HepG2 (cell line): ENCODE measurements at regions of chr6 and their contacts with region 1.

Region 1: GRCh38 chr6:137351890-137352289 is 132.7 kb upstream of the IFNGR1 start:
- DNase-seq: peak; percentile 86
- ATAC-seq: no peak
- H3K4me3 ChIP-seq: no peak overlapping the region
- H3K27ac ChIP-seq: peak overlapping the region; percentile 99
- H3K4me1 ChIP-seq: peaks cover 82% of the 10 kb centered on the region
- H3K27me3 ChIP-seq: no peaks in the 10 kb centered on the region
- CTCF ChIP-seq: no peak
- EP300 ChIP-seq: peak in 1 of 2 experiments; percentile 76; a peak in 2 of 4 replicates
- POLR2A ChIP-seq: no peak
- RAD21 ChIP-seq: no peak

Region 2: DNA sequence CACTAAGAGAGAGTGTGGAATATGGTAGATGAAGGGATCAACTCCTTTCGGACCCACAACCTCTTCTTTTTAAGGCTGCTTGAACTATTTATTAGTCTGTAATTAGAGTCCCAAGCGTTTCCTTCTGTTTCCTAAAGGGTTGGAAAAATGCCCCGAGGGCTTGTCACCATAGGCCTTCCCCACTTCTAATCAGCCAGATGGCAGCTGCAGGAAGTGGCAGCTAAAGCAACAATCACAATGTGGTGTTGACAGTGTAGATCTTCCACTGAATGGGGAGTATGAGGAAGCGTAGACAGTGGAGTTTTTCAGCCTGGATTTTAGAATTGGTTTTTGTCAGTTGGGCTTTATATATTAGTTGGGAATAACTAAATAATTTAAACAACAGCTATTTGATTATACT is 389.2 kb before region 1 on chr6:
- CTCF ChIA-PET with region 1: no interaction called
- POLR2A ChIA-PET with region 1: no interaction called
- in situ Hi-C with region 1: no loop called
- intact Hi-C with region 1: no loop called
- DNase-seq: no peak
- ATAC-seq: no peak
- H3K4me3 ChIP-seq: no peak overlapping the region
- H3K27ac ChIP-seq: no peak overlapping the region
- H3K4me1 ChIP-seq: peaks cover 7% of the 10 kb centered on the region; the same call in 1 of the 2 replicates
- H3K27me3 ChIP-seq: peaks cover 4 to 19% of the 10 kb centered on the region in 2 experiments; a peak in 3 of 5 replicates
- CTCF ChIP-seq: no peak
- EP300 ChIP-seq: no peak
- POLR2A ChIP-seq: no peak
- RAD21 ChIP-seq: no peak

Region 3: DNA sequence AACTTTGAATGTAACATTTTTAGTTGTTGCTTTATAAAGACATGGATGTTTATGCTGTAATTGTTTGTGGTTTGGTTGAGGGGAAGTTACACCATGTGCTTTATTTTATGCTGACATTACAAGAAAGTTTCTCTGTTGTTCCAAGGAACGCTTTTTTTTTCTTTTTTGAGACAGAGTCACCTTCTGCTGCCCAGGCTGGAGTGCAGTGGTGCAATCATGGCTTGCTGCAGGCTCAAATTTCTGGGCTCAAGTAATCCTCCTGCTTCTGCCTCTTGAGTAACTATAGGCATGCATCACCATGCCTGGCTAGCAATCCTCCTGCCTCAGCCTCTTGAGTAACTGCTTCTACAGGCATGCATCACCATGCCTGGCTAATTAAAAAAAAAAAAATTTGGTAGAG is 111.7 kb before region 1 on chr6:
- CTCF ChIA-PET with region 1: no interaction called
- POLR2A ChIA-PET with region 1: interaction called, 5 read pairs
- in situ Hi-C with region 1: no loop called
- intact Hi-C with region 1: loop called (anchors 10 kb)
- DNase-seq: peak; percentile 35
- ATAC-seq: no peak
- H3K4me3 ChIP-seq: no peak overlapping the region
- H3K27ac ChIP-seq: no peak overlapping the region
- H3K4me1 ChIP-seq: peaks cover 57% of the 10 kb centered on the region
- H3K27me3 ChIP-seq: no peaks in the 10 kb centered on the region
- CTCF ChIP-seq: no peak
- EP300 ChIP-seq: no peak
- POLR2A ChIP-seq: no peak
- RAD21 ChIP-seq: no peak

Region 4: DNA sequence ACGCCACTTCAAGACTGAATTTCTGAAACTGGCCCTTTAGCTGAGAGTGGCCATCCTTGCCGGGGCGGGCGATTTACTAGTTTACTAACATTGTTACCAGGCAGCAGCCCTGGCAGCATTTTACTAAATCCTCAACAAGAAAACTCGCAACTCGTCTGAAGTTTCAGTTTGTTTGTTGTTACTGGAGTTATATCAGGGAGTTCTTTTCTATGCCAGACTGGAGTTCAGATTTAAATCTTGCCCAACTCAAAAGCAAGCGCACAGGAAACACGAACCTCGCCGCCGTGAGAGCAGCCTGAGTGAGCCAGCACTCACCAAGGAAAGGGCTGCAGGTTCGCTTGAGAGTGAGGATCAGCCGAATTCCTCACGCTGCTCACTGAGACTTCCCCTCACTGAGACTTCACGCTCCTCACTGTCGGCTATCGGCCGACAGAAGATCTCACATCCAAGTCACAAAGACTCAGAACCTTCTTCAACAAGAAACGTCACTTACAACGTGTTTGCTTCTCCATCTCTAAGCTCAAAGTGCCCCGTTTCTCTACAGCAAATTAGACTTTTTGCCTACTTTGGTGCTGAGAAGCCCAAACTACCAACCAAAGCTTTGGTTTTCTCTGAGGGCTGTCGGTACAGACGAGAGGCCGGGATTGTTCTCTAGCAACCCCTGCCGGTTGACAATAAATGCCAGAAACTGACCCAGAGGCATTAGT is 63.4 kb after region 1 on chr6:
- CTCF ChIA-PET with region 1: no interaction called
- POLR2A ChIA-PET with region 1: interaction called, 6 read pairs
- in situ Hi-C with region 1: no loop called
- intact Hi-C with region 1: loop called (anchors 5 kb)
- DNase-seq: peak; percentile 50
- ATAC-seq: peak; percentile 92
- H3K4me3 ChIP-seq: peak overlapping the region in 2 of 3 experiments; percentile 0 to 41; a peak in 2 of 6 replicates
- H3K27ac ChIP-seq: peak overlapping the region; percentile 27
- H3K4me1 ChIP-seq: peaks cover 33% of the 10 kb centered on the region
- H3K27me3 ChIP-seq: no peaks in the 10 kb centered on the region
- CTCF ChIP-seq: peak; percentile 79
- EP300 ChIP-seq: no peak
- POLR2A ChIP-seq: no peak
- RAD21 ChIP-seq: peak; percentile 80

Region 5: DNA sequence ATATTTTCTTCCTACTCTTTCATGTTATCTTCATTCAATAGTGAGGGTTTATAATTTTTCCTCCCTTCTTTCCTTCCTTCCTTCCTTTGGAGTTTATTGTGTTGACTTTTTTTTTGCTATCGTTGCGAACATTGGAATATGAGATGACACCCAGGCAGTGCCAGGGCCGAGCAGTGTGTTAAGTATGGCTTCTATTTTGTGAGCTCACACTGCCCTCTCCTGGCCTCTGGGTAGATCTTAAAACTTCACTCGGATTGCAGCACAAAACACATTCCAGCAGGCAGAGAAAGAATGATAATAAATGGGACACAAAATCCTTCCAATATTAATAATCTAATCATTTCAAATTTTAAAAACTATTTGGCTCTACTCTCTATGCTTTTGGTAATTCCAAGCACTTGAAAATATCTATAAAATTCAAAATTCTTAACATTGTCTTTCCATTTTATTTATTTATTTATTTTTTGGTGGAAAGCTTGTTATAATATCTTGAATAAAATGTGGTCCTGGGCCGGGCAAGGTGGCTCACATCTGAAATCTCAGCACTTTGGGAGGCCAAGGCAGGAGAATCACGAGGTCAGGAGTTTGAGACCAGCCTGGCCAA is 289.7 kb after region 1 on chr6:
- CTCF ChIA-PET with region 1: no interaction called
- POLR2A ChIA-PET with region 1: no interaction called
- in situ Hi-C with region 1: no loop called
- intact Hi-C with region 1: loop called (anchors 5 kb)
- DNase-seq: peak; percentile 79
- ATAC-seq: peak; percentile 99
- H3K4me3 ChIP-seq: no peak overlapping the region
- H3K27ac ChIP-seq: no peak overlapping the region
- H3K4me1 ChIP-seq: peaks cover 14% of the 10 kb centered on the region; the same call in 1 of the 2 replicates
- H3K27me3 ChIP-seq: no peaks in the 10 kb centered on the region
- CTCF ChIP-seq: peak; percentile 93
- EP300 ChIP-seq: no peak
- POLR2A ChIP-seq: no peak
- RAD21 ChIP-seq: peak; percentile 90

Region 6: DNA sequence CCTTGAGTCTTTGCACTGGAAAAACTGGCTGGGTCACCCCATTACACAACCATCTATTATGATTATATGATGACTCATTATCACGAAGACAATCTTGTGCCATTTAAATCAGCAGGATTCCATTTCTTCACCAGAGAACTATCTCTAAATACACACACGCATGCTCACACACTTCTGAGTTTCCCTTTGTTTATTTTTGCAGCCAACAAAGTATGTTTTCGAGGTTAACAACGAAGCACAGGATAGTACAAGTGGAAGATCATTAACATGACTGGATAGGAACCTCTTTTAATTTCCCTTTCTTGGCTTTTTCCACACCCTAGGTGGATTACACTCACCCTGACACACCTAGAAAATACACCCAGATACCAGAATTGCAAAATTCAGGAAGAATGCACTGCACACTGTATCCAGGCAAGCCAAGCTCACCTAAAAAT is 736.5 kb after region 1 on chr6:
- CTCF ChIA-PET with region 1: no interaction called
- POLR2A ChIA-PET with region 1: no interaction called
- in situ Hi-C with region 1: no loop called
- intact Hi-C with region 1: loop called (anchors 10 kb)
- DNase-seq: peak; percentile 42
- ATAC-seq: no peak
- H3K4me3 ChIP-seq: no peak overlapping the region
- H3K27ac ChIP-seq: no peak overlapping the region
- H3K4me1 ChIP-seq: peaks cover 54% of the 10 kb centered on the region
- H3K27me3 ChIP-seq: no peaks in the 10 kb centered on the region
- CTCF ChIP-seq: no peak
- EP300 ChIP-seq: no peak
- POLR2A ChIP-seq: no peak
- RAD21 ChIP-seq: no peak